ENCODE measurements at regions of chr7 and their contacts with region 1.

Region 1: DNA sequence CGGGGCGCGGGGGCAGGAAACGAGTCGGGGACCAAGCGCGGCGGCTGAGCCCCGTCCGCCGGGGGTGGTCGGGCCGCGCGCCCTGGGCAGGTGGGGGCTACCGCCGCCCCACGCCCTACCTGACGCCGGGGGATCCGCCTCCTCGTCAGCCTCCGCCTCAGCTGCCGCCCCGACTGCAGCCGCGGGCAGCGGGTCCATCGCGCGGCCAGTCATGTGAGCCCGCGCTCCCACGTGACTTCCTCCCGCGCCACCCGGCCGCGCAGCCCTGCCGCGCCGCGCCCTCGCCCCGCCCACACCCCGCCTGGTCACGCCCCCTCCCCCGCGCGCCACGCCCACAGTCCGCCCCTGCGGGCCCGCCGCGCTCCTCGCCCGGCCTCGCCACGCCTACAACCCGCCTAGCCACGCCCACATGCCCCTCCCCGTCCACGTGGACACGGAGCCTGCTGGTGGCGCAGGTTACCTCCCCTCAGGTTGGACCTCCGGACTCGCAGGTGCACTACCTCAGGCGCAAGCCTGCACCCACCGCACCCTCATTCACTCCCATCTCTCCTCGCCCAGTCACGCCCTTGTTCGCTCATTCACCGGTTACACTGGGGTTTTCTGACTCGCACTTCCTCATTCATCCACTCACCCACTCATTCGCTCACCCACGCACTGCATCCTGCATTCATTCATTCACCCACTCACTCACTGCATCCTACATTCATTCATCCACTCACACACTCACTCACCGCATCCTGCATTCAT is at the start of gene SNX8:
- DNase-seq: peak; percentile 96
- H3K4me3 Mint-ChIP-seq: no peak within 1 kb of the TSS
- H3K27ac Mint-ChIP-seq: peak within 1 kb of the TSS; percentile 56
- H3K4me1 Mint-ChIP-seq: peaks cover 10% of the 10 kb centered on the region
- H3K27me3 Mint-ChIP-seq: no peaks in the 10 kb centered on the region
- total RNA-seq, gene SNX8: 35.4 to 40.2 TPM

Region 2: DNA sequence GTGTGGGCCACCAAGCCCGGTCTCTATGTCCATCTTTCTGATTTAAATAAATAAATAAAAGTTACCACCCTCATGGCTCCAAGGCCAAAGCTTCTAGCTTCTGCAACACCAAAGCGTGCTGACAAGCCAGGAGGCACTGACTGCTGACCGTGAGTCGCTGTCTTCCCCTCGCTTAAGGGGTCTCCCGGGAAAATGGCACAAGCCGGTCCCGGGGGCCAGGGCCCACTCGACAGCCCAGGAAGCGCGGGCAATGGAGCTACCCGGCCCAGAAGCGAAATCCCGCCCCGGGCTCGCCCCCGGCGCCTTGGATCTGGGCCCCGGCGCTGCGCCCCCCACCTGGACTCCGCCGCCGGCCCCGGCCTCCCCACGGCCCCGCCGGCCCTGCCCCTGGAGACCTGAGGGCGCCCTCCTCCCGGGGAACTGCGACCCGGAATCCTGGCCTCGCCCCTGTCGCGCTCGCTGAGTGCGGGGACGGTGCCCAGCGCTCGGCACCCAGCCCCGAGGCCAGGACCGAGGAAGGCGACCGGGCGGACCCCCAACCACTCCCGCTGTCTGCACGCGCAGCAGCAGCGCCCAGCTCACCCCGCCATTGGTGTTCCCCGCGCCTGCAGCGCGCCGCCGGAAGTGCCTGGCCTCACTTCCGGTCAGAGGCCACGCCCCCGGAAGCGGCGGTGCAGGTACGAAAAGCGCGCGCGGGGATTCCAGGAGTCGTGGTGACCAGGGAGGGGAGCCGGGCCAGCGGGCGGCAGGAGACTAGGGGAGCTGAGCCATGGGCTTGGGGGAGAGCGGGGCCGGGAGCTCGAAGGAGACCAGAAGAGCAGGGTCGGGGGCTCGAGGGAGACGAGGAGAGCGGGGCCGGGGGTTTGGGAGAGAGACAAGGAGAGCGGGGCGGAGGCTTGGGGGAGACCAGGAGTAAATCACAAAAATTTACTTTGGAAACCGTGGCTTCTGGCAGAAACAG is 72.5 kb before region 1 on chr7 and contains the starts of genes MRM2 and NUDT1:
- CTCF ChIA-PET with region 1: no interaction called
- POLR2A ChIA-PET with region 1: no interaction called
- intact Hi-C with region 1: loop called (anchors 2 kb)
- DNase-seq: peak; percentile 82
- H3K4me3 Mint-ChIP-seq: peak within 1 kb of the TSS; percentile 91
- H3K27ac Mint-ChIP-seq: peak within 1 kb of the TSS; percentile 88
- H3K4me1 Mint-ChIP-seq: peaks cover 20% of the 10 kb centered on the region
- H3K27me3 Mint-ChIP-seq: no peaks in the 10 kb centered on the region
- total RNA-seq, gene MRM2: 25.5 to 26.9 TPM
- total RNA-seq, gene NUDT1: 112 to 114 TPM

Measured in activated CD4-positive, alpha-beta memory T cell treated with anti-CD3 and anti-CD28 coated beads for 36 hours (primary cell).